Tibial artery (tissue), 4 donors: ENCODE measurements at regions of chrX and their contacts with region 1.

Region 1: GRCh38 chrX:133346026-133346425 is 69.3 kb downstream of the GPC4 start:
- DNase-seq: no peak
- H3K4me3 ChIP-seq: no peak overlapping the region
- H3K27ac ChIP-seq: no peak overlapping the region
- H3K4me1 ChIP-seq: peaks cover 0 to 38% (median 0%) of the 10 kb centered on the region in 4 donors
- H3K27me3 ChIP-seq: no peaks in the 10 kb centered on the region
- CTCF ChIP-seq: no peak

Region 2: GRCh38 chrX:133375615-133376340 is 29.8 kb after region 1 on chrX:
- intact Hi-C with region 1: no loop called
- DNase-seq: peak in 1 of 2 donors; percentile 60
- H3K4me3 ChIP-seq: no peak overlapping the region
- H3K27ac ChIP-seq: peak overlapping the region; percentile 41 to 44
- H3K4me1 ChIP-seq: peaks cover 0 to 39% (median 2%) of the 10 kb centered on the region in 4 donors
- H3K27me3 ChIP-seq: no peaks in the 10 kb centered on the region
- CTCF ChIP-seq: no peak

Region 3: DNA sequence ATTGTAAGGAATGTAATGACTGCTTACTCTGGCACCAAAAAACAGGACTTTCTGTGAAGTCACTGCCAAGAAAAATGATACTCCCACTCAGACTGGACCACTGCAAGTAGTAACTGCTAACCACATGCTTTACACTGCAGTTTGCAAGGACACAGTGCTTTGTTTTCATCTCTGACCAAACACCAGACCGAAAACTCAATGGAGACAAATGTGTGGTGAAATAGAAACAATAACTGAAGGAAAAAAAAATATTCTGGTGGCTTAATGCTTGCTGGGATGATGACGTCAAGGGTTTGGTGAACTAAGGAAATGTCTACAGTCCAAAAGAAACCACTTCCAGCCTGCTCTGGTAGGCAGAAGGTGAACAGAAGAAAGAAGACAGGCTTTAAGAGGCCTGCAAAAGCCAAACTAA is 56.0 kb after region 1 on chrX:
- intact Hi-C with region 1: loop called (anchors 10 kb)
- DNase-seq: no peak
- H3K4me3 ChIP-seq: no peak overlapping the region
- H3K27ac ChIP-seq: peak overlapping the region in 1 of 2 donors; percentile 39
- H3K4me1 ChIP-seq: peaks cover 0 to 29% (median 6%) of the 10 kb centered on the region in 4 donors
- H3K27me3 ChIP-seq: no peaks in the 10 kb centered on the region
- CTCF ChIP-seq: no peak

Region 4: DNA sequence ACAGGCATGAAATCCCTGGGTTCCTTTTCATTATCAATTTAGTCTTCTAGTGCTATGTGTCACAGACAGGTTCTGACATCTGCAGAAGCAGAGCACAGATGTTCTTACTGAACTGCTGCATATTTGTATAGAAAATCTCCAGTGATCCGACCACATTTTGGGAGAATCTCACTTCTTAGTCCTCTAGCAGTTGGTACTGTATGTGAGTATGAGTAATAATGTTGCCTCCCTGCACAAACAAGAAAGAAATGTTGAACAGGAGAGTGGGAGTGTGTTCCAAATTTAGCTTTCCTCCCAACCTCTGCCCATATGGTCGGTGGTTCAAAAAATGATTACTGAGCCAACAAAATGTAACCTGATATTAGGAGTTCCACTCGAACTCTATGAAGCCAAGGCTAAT is 234.6 kb after region 1 on chrX:
- intact Hi-C with region 1: no loop called
- DNase-seq: no peak
- H3K4me3 ChIP-seq: no peak overlapping the region
- H3K27ac ChIP-seq: no peak overlapping the region
- H3K4me1 ChIP-seq: no peaks in the 10 kb centered on the region
- H3K27me3 ChIP-seq: no peaks in the 10 kb centered on the region
- CTCF ChIP-seq: no peak